Vagina (tissue), 2 donors: ENCODE measurements at regions of chr7 and their contacts with region 1.

Region 1: DNA sequence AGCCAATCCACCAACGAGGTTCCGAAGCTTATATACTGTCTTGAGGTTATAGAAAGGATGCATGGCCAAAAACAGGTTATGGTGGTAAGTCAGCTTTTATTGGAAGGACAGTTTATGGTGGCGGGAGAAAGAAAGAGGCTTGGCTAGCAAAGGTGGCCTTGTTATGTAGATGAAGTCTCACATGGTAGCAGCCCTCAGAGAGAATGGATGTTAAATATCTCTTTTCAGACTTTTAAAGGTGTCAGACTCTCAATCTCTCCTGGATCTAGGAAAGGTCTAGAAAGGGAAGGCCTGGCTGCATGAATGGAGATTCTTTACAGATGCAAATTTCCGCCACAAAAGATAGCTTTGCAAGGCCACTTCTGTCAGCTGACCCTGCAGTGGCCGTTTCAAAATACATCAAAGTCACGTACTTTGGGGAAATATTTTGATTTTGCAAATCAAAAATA is 333.8 kb downstream of the GALNT17 start:
- DNase-seq: no peak
- H3K4me3 ChIP-seq: no peak overlapping the region
- H3K27ac ChIP-seq: no peak overlapping the region
- H3K4me1 ChIP-seq: no peaks in the 10 kb centered on the region
- H3K27me3 ChIP-seq: no peaks in the 10 kb centered on the region
- CTCF ChIP-seq: no peak
- POLR2A ChIP-seq: no peak

Region 2: GRCh38 chr7:69684369-69685292 is 1781.1 kb before region 1 on chr7:
- intact Hi-C with region 1: loop called (anchors 5 kb)
- DNase-seq: no peak
- H3K4me3 ChIP-seq: no peak overlapping the region
- H3K27ac ChIP-seq: no peak overlapping the region
- H3K4me1 ChIP-seq: no peaks in the 10 kb centered on the region
- H3K27me3 ChIP-seq: no peaks in the 10 kb centered on the region
- CTCF ChIP-seq: no peak
- POLR2A ChIP-seq: no peak

Region 3: GRCh38 chr7:71424166-71425035 is 41.4 kb before region 1 on chr7:
- intact Hi-C with region 1: no loop called
- DNase-seq: no peak
- H3K4me3 ChIP-seq: no peak overlapping the region
- H3K27ac ChIP-seq: no peak overlapping the region
- H3K4me1 ChIP-seq: peaks cover 7% of the 10 kb centered on the region
- H3K27me3 ChIP-seq: no peaks in the 10 kb centered on the region
- CTCF ChIP-seq: no peak
- POLR2A ChIP-seq: no peak